ENCODE measurements at regions of chr4 and their contacts with region 1.

Region 1: DNA sequence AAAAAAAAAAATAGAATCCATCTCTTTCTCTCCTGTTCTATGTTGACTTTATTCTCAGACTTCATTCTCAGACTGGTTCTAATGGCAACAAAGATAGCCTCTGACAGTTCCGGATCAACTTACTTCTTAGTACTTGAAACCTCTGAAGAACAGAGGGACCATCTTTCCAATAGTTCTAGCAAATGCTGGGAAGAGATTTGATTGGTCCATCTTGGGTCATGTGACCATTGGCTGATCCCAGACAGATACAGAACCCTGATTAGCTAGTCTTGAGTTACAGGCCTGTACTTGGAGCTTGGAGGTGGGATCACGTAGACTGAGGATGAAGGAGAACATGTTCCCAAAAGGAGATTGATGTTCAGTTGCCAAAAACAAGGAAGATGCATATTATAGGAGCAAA is 66.9 kb upstream of the STIM2 start:
- DNase-seq: no peak
- ATAC-seq: no peak
- H3K4me3 ChIP-seq: no peak overlapping the region
- H3K27ac ChIP-seq: no peak overlapping the region
- H3K4me1 ChIP-seq: peaks cover 12% of the 10 kb centered on the region
- H3K27me3 ChIP-seq: no peaks in the 10 kb centered on the region
- CTCF ChIP-seq: no peak

Region 2: DNA sequence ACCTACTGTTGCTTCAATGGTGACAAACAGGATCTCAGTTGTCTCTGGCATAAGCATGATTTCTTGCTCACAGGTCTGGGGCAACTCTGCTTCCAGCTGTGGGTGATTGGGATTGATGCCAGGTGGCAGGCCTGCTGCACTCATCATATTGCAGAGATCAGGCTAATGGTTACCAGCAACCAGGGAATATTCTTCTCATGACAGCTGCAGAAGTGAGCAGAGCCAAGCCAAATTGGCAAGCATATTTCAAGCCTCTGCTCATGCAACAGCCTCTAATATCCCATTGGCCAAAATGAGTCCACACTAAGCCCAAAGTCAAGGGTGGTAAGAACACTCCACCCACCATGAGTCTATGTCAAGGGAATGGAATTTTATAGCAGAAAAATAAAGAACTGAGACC is 236.6 kb before region 1 on chr4:
- intact Hi-C with region 1: no loop called
- DNase-seq: peak in 1 of 2 donors; percentile 18
- ATAC-seq: peak in 3 of 4 donors; percentile 39 to 49 (median 46)
- H3K4me3 ChIP-seq: no peak overlapping the region
- H3K27ac ChIP-seq: no peak overlapping the region
- H3K4me1 ChIP-seq: no peaks in the 10 kb centered on the region
- H3K27me3 ChIP-seq: no peaks in the 10 kb centered on the region
- CTCF ChIP-seq: no peak

Region 3: GRCh38 chr4:27000820-27001219 is 207.1 kb after region 1 on chr4:
- intact Hi-C with region 1: loop called (anchors 10 kb)
- DNase-seq: no peak
- ATAC-seq: no peak
- H3K4me3 ChIP-seq: no peak overlapping the region
- H3K27ac ChIP-seq: no peak overlapping the region
- H3K4me1 ChIP-seq: no peaks in the 10 kb centered on the region
- H3K27me3 ChIP-seq: no peaks in the 10 kb centered on the region
- CTCF ChIP-seq: peak; percentile 11

Measured in psoas muscle (tissue), 8 donors.